Activated CD4-positive, alpha-beta memory T cell treated with anti-CD3 and anti-CD28 coated beads for 36 hours (primary cell): ENCODE measurements at regions of chr1 and their contacts with region 1.

Region 1: GRCh38 chr1:111197598-111198284 is 2.7 kb downstream of the DENND2D start:
- DNase-seq: peak; percentile 68
- H3K4me3 Mint-ChIP-seq: peak overlapping the region; percentile 92
- H3K27ac Mint-ChIP-seq: peak overlapping the region; percentile 97
- H3K4me1 Mint-ChIP-seq: peaks cover 72% of the 10 kb centered on the region
- H3K27me3 Mint-ChIP-seq: no peaks in the 10 kb centered on the region

Region 2: DNA sequence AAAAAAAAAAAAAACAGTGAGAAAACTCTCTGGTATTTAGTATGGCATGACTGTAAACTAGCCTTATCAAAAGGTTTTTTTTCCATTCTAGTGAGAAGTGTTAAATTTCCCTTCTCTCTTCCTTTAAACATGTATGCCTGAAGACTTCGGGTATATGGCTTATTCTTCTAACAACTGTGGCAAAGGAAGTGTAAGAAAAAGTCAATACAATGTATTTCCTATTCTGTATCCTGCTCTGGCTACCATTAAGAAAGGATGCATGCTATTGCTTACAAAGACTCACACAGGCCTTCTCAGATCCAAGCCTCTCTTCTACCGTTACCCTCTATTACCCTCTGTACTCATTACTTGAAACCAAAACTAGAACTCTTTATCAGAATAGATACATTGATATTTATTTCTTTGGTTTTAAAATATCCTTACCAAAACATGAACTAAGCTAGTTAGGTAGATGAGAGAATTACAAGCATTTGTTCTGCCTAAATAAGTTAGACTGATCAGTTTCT is 49.3 kb before region 1 on chr1:
- CTCF ChIA-PET with region 1: interaction called, 3 read pairs
- POLR2A ChIA-PET with region 1: interaction called, 3 read pairs
- intact Hi-C with region 1: loop called (anchors 2 kb)
- DNase-seq: no peak
- H3K4me3 Mint-ChIP-seq: no peak overlapping the region
- H3K27ac Mint-ChIP-seq: no peak overlapping the region
- H3K4me1 Mint-ChIP-seq: peaks cover 74% of the 10 kb centered on the region
- H3K27me3 Mint-ChIP-seq: no peaks in the 10 kb centered on the region

Region 3: GRCh38 chr1:111183308-111184069 is 14.3 kb before region 1 on chr1:
- CTCF ChIA-PET with region 1: interaction called, 10 read pairs
- POLR2A ChIA-PET with region 1: interaction called, 16 read pairs
- intact Hi-C with region 1: no loop called
- DNase-seq: no peak
- H3K4me3 Mint-ChIP-seq: no peak overlapping the region
- H3K27ac Mint-ChIP-seq: peak overlapping the region; percentile 61
- H3K4me1 Mint-ChIP-seq: peaks cover 70% of the 10 kb centered on the region
- H3K27me3 Mint-ChIP-seq: no peaks in the 10 kb centered on the region

Region 4: GRCh38 chr1:111214074-111214801 is 16.5 kb after region 1 on chr1:
- CTCF ChIA-PET with region 1: interaction called, 143 read pairs
- POLR2A ChIA-PET with region 1: interaction called, 256 read pairs
- intact Hi-C with region 1: loop called (anchors 1 kb)
- DNase-seq: peak; percentile 45
- H3K4me3 Mint-ChIP-seq: peak overlapping the region; percentile 66
- H3K27ac Mint-ChIP-seq: peak overlapping the region; percentile 95
- H3K4me1 Mint-ChIP-seq: peaks cover 72% of the 10 kb centered on the region
- H3K27me3 Mint-ChIP-seq: peaks cover 3% of the 10 kb centered on the region

Region 5: DNA sequence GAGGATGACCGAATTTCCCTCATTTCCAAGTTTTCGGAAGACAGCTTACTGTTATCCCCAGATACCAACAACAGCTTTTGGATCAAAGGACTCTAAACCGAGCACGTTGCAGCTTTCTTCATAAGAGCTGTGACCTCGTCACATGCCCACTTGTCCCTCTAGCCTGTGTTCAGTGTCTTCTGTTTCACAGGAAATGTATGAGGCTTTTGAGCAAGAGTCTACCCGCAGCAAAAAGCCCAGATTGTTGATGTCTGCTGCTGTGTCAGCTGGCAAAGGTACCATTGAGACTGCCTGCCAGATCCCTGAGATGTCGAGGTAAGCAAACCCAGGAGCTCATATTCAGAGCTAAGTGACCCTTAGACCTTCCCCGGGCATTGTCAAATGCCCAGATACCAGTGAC is 53.8 kb after region 1 on chr1:
- CTCF ChIA-PET with region 1: no interaction called
- POLR2A ChIA-PET with region 1: no interaction called
- intact Hi-C with region 1: no loop called
- DNase-seq: peak; percentile 12
- H3K4me3 Mint-ChIP-seq: no peak overlapping the region
- H3K27ac Mint-ChIP-seq: no peak overlapping the region
- H3K4me1 Mint-ChIP-seq: peaks cover 9% of the 10 kb centered on the region
- H3K27me3 Mint-ChIP-seq: no peaks in the 10 kb centered on the region

Region 6: DNA sequence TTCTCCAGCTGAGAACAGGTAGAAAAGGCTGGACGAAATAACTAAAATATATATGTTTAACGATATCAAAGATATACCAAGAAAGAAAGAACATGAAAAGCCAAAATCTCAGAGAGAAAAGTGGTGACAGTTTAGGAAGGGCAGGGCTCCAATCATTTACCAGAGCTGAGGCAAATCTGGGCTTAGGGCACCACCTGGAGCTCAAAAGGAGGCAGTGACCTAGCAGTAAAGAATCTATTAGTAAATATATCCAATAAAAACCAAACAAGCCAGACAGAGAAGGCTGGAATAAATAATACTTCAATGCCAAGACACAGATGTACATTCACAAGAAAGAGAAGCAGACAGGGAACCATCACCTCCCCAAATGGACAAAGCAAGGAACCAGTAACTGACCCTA is 136.4 kb after region 1 on chr1:
- CTCF ChIA-PET with region 1: interaction called, 13 read pairs
- POLR2A ChIA-PET with region 1: no interaction called
- intact Hi-C with region 1: no loop called
- DNase-seq: peak; percentile 62
- H3K4me3 Mint-ChIP-seq: no peak overlapping the region
- H3K27ac Mint-ChIP-seq: peak overlapping the region; percentile 54
- H3K4me1 Mint-ChIP-seq: peaks cover 2% of the 10 kb centered on the region
- H3K27me3 Mint-ChIP-seq: no peaks in the 10 kb centered on the region

Region 7: DNA sequence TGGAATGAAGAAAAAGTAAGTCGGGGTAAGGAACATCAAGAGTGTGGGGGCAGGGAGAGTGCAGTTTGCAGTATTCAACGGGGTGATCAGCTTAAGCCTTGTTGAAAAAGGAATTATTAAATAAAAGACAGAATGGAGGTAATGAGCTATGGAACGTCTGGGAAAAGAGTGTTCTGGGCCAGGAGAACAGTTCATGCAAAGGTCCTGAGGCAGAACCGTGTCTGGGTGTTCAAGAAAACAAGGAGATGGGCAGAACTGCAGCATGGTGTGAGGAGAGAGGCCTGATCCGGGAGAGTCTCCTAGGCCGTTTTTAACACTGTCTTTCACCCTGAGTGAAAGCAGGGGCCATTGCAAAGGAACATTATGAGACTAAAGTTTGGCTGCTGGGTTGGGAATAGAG is 209.6 kb after region 1 on chr1:
- CTCF ChIA-PET with region 1: no interaction called
- POLR2A ChIA-PET with region 1: no interaction called
- intact Hi-C with region 1: no loop called
- DNase-seq: no peak
- H3K4me3 Mint-ChIP-seq: no peak overlapping the region
- H3K27ac Mint-ChIP-seq: no peak overlapping the region
- H3K4me1 Mint-ChIP-seq: peaks cover 31% of the 10 kb centered on the region
- H3K27me3 Mint-ChIP-seq: no peaks in the 10 kb centered on the region